ENCODE measurements at regions of chr1 and their contacts with region 1.

Region 1: DNA sequence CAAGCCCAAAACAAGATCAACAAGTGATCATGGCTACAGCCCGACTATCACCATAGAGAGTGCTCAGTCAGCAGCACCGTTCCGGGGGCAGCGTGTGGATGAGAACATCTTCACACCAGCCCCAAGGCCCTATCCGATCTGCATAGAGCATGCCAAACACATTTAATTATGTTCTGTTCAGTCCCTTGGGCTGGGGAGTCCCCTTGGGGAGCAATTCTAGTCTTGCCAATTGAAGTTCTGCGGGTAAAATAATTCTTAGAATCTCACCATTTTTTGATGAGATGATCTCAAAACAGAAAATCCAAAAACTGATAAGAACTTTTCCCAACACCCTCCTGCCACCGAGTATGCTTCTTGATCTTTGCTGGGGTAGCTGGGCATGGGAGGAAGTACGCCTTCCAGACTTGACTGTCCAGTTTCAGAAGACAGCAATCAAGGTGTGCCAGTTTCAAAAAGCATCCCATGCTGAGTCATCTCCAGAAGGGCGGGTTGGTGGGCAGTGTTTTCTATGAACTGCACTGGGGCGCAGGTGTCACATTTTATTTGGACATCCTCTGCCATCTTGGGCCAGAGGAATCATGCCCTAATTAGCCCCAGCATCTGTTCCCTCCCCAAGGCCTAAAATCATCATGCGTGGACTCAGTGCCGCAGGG is 20.8 kb upstream of the PTPRF start:
- DNase-seq: peak; percentile 45
- H3K4me3 ChIP-seq: no peak overlapping the region
- H3K27ac ChIP-seq: peak overlapping the region; percentile 22
- H3K4me1 ChIP-seq: peaks cover 23% of the 10 kb centered on the region
- H3K27me3 ChIP-seq: no peaks in the 10 kb centered on the region
- CTCF ChIP-seq: no peak

Region 2: DNA sequence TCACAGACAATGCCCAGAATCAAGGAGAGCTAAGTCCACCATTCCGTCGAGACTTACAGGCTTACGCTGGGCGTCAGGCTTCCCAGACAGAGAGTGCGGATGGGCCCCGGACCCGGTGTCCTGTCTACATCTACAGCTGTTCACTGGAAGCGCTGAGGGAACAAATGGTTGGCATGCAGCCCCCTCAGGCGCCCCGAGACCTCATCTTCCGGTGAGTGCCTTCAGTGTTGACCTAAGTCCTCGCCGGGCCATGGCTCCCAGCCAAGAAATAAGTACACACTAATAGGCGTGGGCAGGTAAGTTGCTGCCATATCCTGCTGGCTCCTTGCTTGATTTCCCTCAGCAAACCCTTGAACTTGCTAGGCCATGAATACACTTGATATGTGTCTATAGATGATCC is 82.3 kb before region 1 on chr1:
- CTCF ChIA-PET with region 1: no interaction called
- dilution Hi-C with region 1: loop called (anchors 5 kb)
- in situ Hi-C with region 1: no loop called
- intact Hi-C with region 1: no loop called
- DNase-seq: no peak
- H3K4me3 ChIP-seq: no peak overlapping the region
- H3K27ac ChIP-seq: no peak overlapping the region
- H3K4me1 ChIP-seq: peaks cover 3% of the 10 kb centered on the region
- H3K27me3 ChIP-seq: no peaks in the 10 kb centered on the region
- CTCF ChIP-seq: no peak

Region 3: GRCh38 chr1:43454266-43455011 is 55.4 kb before region 1 on chr1:
- CTCF ChIA-PET with region 1: no interaction called
- dilution Hi-C with region 1: loop called (anchors 5 kb)
- in situ Hi-C with region 1: no loop called
- intact Hi-C with region 1: no loop called
- DNase-seq: peak; percentile 26
- H3K4me3 ChIP-seq: peak overlapping the region; percentile 49 to 54 (median 50)
- H3K27ac ChIP-seq: peak overlapping the region; percentile 48
- H3K4me1 ChIP-seq: peaks cover 20% of the 10 kb centered on the region
- H3K27me3 ChIP-seq: no peaks in the 10 kb centered on the region
- CTCF ChIP-seq: peak in 1 of 2 donors; percentile 2

Region 4: GRCh38 chr1:43466403-43466802 is 43.4 kb before region 1 on chr1:
- CTCF ChIA-PET with region 1: no interaction called
- dilution Hi-C with region 1: no loop called
- in situ Hi-C with region 1: no loop called
- intact Hi-C with region 1: no loop called
- DNase-seq: no peak
- H3K4me3 ChIP-seq: no peak overlapping the region
- H3K27ac ChIP-seq: no peak overlapping the region
- H3K4me1 ChIP-seq: no peaks in the 10 kb centered on the region
- H3K27me3 ChIP-seq: no peaks in the 10 kb centered on the region
- CTCF ChIP-seq: no peak

Measured in mammary epithelial cell (primary cell).